AG04450 (cell line): ENCODE measurements at regions of chr3 and their contacts with region 1.

Region 1: DNA sequence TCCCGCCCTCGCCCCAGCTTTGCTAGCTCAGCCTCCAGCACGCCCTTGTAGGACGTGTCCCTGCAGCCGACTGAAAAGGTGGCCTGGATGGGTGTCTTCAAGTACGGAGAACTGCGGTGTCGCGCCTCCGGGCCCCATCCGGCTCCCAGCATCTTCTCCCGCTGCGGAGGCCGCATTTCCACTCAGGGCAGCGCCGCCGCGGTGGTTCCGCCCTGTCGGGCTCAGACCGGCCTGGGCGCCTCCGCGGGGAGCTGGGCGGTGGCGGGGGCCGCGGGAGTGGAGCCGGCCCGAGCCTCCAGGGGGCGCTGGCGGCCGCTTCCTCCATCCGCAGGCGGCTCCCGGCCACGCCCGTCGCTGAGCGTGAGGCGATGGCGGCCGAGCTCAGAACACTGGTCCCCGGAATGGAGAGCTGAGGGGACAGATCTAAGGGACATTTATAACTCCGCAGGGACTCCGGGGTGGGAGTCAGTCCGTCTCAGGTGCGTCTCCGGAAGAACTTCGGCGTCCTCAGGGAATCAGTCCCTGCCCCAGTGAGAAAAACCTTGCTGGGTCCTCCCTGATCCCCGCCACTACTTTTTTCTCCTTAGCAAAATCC is 13.6 kb upstream of the SMCO1 start:
- DNase-seq: no peak
- H3K4me3 ChIP-seq: peak overlapping the region; percentile 55
- H3K27ac ChIP-seq: peak overlapping the region; percentile 31
- H3K27me3 ChIP-seq: no peaks in the 10 kb centered on the region
- CTCF ChIP-seq: peak; percentile 64

Region 2: GRCh38 chr3:196541684-196542445 is 13.1 kb after region 1 on chr3:
- CTCF ChIA-PET with region 1: interaction called, 10 read pairs
- POLR2A ChIA-PET with region 1: no interaction called
- DNase-seq: no peak
- H3K4me3 ChIP-seq: no peak overlapping the region
- H3K27ac ChIP-seq: no peak overlapping the region
- H3K27me3 ChIP-seq: peaks cover 7% of the 10 kb centered on the region
- CTCF ChIP-seq: no peak

Region 3: DNA sequence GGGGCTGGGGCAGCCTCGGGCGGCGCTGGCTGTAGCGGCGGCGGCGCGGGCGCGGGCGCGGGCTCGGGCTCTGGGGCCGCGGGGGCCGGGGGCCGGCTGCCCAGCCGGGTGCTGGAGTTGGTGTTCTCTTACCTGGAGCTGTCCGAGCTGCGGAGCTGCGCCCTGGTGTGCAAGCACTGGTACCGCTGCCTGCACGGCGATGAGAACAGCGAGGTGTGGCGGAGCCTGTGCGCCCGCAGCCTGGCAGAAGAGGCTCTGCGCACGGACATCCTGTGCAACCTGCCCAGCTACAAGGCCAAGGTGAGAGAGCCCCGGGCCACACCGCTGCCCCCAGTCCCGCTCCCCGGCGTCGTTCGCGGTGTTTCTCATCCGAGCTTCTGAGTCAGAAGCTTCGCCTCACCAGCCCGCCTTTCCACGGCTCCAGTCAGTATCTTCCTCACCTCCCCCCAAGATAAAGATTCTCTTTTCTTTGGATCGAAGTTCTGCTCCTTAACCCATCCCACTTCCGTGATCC is 40.3 kb after region 1 on chr3:
- CTCF ChIA-PET with region 1: interaction called, 12 read pairs
- POLR2A ChIA-PET with region 1: interaction called, 3 read pairs
- DNase-seq: no peak
- H3K4me3 ChIP-seq: peak overlapping the region; percentile 100
- H3K27ac ChIP-seq: peak overlapping the region; percentile 52
- H3K27me3 ChIP-seq: no peaks in the 10 kb centered on the region
- CTCF ChIP-seq: no peak

Region 4: DNA sequence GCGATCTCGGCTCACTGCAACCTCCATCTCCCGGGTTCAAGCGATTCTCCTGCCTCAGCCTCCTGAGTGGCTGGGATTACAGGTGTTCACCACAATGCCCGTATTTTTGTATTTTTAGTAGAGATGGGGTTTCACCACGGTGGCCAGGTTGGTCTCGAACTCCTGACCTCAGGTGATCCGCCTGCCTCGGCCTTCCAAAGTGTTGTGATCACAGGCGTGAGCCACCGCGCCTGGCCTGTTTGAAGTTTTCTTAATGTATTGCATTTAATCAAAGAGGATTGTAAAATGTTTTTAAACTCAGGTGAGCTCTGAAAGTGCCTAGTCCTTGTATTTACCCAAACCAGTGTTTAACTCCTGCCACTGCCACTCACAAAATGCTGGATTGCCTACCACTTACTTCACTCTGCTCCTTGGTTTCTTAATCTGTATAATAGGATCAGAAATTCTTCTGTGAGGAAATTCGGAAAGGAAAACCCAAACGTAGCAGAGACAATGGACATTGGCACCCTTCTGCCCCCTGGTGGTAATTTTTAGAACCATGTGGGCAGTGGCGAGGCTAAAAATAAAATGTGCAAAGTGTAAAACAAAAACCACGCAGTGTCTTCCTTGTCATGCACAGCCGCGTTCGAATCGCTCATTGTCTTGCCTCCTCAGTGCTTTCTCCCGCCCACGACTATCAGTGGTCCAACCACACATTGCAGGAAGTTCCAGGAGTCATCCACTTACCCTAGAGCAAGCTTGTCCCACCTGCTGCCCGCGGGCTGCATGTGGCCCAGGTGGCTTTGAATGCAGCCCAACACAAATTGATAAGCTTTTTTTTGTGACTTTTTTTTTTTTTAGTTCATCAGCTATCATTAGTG is 156.0 kb after region 1 on chr3:
- CTCF ChIA-PET with region 1: interaction called, 12 read pairs
- POLR2A ChIA-PET with region 1: no interaction called
- DNase-seq: peak; percentile 7
- H3K4me3 ChIP-seq: no peak overlapping the region
- H3K27ac ChIP-seq: no peak overlapping the region
- H3K27me3 ChIP-seq: peaks cover 6% of the 10 kb centered on the region
- CTCF ChIP-seq: peak; percentile 87